CD8-positive, alpha-beta T cell (primary cell): ENCODE measurements at regions of chr15 and their contacts with region 1.

Region 1: GRCh38 chr15:56245871-56246814 is 2.5 kb upstream of the RFX7 start:
- DNase-seq: peak; percentile 72 to 92 (median 88)
- ATAC-seq: peak; percentile 74
- H3K4me3 ChIP-seq: peak overlapping the region; percentile 66 to 76
- H3K4me3 Mint-ChIP-seq: peak overlapping the region; percentile 92
- H3K27ac ChIP-seq: peak overlapping the region; percentile 33 to 69
- H3K27ac Mint-ChIP-seq: peak overlapping the region; percentile 95
- H3K4me1 ChIP-seq: peaks cover 28% of the 10 kb centered on the region
- H3K4me1 Mint-ChIP-seq: peaks cover 36% of the 10 kb centered on the region
- H3K27me3 ChIP-seq: no peaks in the 10 kb centered on the region
- H3K27me3 Mint-ChIP-seq: no peaks in the 10 kb centered on the region
- CTCF ChIP-seq: peak; percentile 100

Region 2: GRCh38 chr15:55407949-55408791 is 838.0 kb before region 1 on chr15 and contains the starts of genes CCPG1 and PIERCE2:
- CTCF ChIA-PET with region 1: no interaction called
- POLR2A ChIA-PET with region 1: no interaction called
- intact Hi-C with region 1: loop called in 1 of 2 experiments (anchors 5 kb)
- DNase-seq: peak; percentile 76 to 95 (median 86)
- ATAC-seq: peak; percentile 92
- H3K4me3 ChIP-seq: peak within 1 kb of the TSS; percentile 80 to 84
- H3K4me3 Mint-ChIP-seq: peak within 1 kb of the TSS; percentile 89
- H3K27ac ChIP-seq: peak within 1 kb of the TSS; percentile 82
- H3K27ac Mint-ChIP-seq: peak within 1 kb of the TSS; percentile 92
- H3K4me1 ChIP-seq: peaks cover 26% of the 10 kb centered on the region
- H3K4me1 Mint-ChIP-seq: peaks cover 34% of the 10 kb centered on the region
- H3K27me3 ChIP-seq: no peaks in the 10 kb centered on the region
- H3K27me3 Mint-ChIP-seq: no peaks in the 10 kb centered on the region
- CTCF ChIP-seq: peak; percentile 93
- total RNA-seq, gene CCPG1: 35.5 to 37.6 TPM
- total RNA-seq, gene PIERCE2: not detected

Region 3: DNA sequence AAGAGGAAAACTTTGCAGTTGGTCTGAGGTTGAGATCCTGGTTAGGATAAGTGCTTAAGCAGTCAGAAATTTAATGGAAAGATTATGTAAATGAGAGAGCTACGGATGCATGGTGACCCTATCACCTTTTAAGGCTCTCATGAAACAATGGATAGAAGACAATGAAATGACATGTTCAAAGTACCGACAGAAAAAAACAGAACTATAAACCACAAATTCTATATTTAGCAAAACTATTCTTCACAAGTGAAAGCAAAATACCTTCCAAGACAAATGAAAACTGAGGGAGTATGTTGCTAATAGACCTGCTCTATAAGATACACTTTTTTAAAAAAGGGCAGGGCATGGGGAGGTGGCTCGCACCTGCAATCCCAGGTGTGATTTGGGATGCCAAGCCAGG is 770.3 kb before region 1 on chr15:
- CTCF ChIA-PET with region 1: no interaction called
- POLR2A ChIA-PET with region 1: no interaction called
- intact Hi-C with region 1: no loop called
- DNase-seq: no peak
- ATAC-seq: no peak
- H3K4me3 ChIP-seq: no peak overlapping the region
- H3K4me3 Mint-ChIP-seq: no peak overlapping the region
- H3K27ac ChIP-seq: no peak overlapping the region
- H3K27ac Mint-ChIP-seq: no peak overlapping the region
- H3K4me1 ChIP-seq: no peaks in the 10 kb centered on the region
- H3K4me1 Mint-ChIP-seq: peaks cover 4% of the 10 kb centered on the region
- H3K27me3 ChIP-seq: no peaks in the 10 kb centered on the region
- H3K27me3 Mint-ChIP-seq: no peaks in the 10 kb centered on the region
- CTCF ChIP-seq: no peak

Region 4: GRCh38 chr15:55654561-55655031 is 591.5 kb before region 1 on chr15:
- CTCF ChIA-PET with region 1: no interaction called
- POLR2A ChIA-PET with region 1: no interaction called
- intact Hi-C with region 1: loop called (anchors 5 kb)
- DNase-seq: no peak
- ATAC-seq: no peak
- H3K4me3 ChIP-seq: no peak overlapping the region
- H3K4me3 Mint-ChIP-seq: no peak overlapping the region
- H3K27ac ChIP-seq: no peak overlapping the region
- H3K27ac Mint-ChIP-seq: no peak overlapping the region
- H3K4me1 ChIP-seq: no peaks in the 10 kb centered on the region
- H3K4me1 Mint-ChIP-seq: no peaks in the 10 kb centered on the region
- H3K27me3 ChIP-seq: no peaks in the 10 kb centered on the region
- H3K27me3 Mint-ChIP-seq: no peaks in the 10 kb centered on the region
- CTCF ChIP-seq: no peak

Region 5: GRCh38 chr15:56052395-56053045 is 193.6 kb before region 1 on chr15:
- CTCF ChIA-PET with region 1: interaction called, 14 read pairs
- POLR2A ChIA-PET with region 1: no interaction called
- intact Hi-C with region 1: no loop called
- DNase-seq: peak in 2 of 9 experiments; percentile 58 to 67
- ATAC-seq: peak; percentile 74
- H3K4me3 ChIP-seq: no peak overlapping the region
- H3K4me3 Mint-ChIP-seq: no peak overlapping the region
- H3K27ac ChIP-seq: no peak overlapping the region
- H3K27ac Mint-ChIP-seq: no peak overlapping the region
- H3K4me1 ChIP-seq: no peaks in the 10 kb centered on the region
- H3K4me1 Mint-ChIP-seq: no peaks in the 10 kb centered on the region
- H3K27me3 ChIP-seq: no peaks in the 10 kb centered on the region
- H3K27me3 Mint-ChIP-seq: no peaks in the 10 kb centered on the region
- CTCF ChIP-seq: peak; percentile 97

Region 6: GRCh38 chr15:56228854-56229253 is 17.3 kb before region 1 on chr15:
- CTCF ChIA-PET with region 1: no interaction called
- POLR2A ChIA-PET with region 1: no interaction called
- intact Hi-C with region 1: loop called in 1 of 2 experiments (anchors 2 kb)
- DNase-seq: no peak
- ATAC-seq: no peak
- H3K4me3 ChIP-seq: no peak overlapping the region
- H3K4me3 Mint-ChIP-seq: no peak overlapping the region
- H3K27ac ChIP-seq: no peak overlapping the region
- H3K27ac Mint-ChIP-seq: no peak overlapping the region
- H3K4me1 ChIP-seq: peaks cover 8% of the 10 kb centered on the region
- H3K4me1 Mint-ChIP-seq: peaks cover 12% of the 10 kb centered on the region
- H3K27me3 ChIP-seq: no peaks in the 10 kb centered on the region
- H3K27me3 Mint-ChIP-seq: no peaks in the 10 kb centered on the region
- CTCF ChIP-seq: no peak

Region 7: GRCh38 chr15:56886932-56887781 is 641.0 kb after region 1 on chr15:
- CTCF ChIA-PET with region 1: no interaction called
- POLR2A ChIA-PET with region 1: no interaction called
- intact Hi-C with region 1: loop called in 1 of 2 experiments (anchors 10 kb)
- DNase-seq: peak; percentile 52 to 94 (median 77)
- ATAC-seq: peak; percentile 85
- H3K4me3 ChIP-seq: peak overlapping the region; percentile 77
- H3K4me3 Mint-ChIP-seq: peak overlapping the region; percentile 86
- H3K27ac ChIP-seq: peak overlapping the region; percentile 68 to 92
- H3K27ac Mint-ChIP-seq: peak overlapping the region; percentile 86
- H3K4me1 ChIP-seq: peaks cover 14% of the 10 kb centered on the region
- H3K4me1 Mint-ChIP-seq: peaks cover 31% of the 10 kb centered on the region
- H3K27me3 ChIP-seq: no peaks in the 10 kb centered on the region
- H3K27me3 Mint-ChIP-seq: no peaks in the 10 kb centered on the region
- CTCF ChIP-seq: no peak

Region 8: DNA sequence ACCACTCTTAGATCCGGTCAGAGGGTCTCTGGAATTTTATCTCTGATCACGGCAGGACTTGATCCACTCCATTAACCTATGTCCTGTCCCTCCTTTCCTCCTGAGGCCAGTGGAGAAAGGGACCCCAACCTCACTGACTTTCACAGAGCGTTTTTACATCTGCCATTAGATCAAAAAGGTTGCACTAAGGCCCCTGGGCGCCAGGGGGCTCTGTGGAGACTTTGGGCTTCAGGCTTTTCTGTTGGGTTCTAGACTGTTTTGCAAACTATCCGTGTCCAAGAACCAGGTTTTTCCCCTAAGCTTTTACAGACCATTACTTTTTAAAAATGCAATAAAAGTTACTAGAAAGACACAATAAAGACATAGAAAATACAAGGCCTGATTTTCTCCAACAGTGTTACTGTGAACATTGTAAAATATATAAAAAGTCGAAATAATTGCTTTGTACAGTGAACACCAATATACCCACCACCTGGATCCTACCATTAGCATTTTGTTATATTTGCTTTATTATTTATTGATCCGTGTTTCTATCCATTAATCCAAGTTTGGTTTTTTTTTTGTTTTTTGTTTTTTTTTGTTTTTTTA is 1620.1 kb after region 1 on chr15:
- CTCF ChIA-PET with region 1: no interaction called
- POLR2A ChIA-PET with region 1: no interaction called
- intact Hi-C with region 1: no loop called
- DNase-seq: peak in 8 of 9 experiments; percentile 8 to 49 (median 24)
- ATAC-seq: no peak
- H3K4me3 ChIP-seq: no peak overlapping the region
- H3K4me3 Mint-ChIP-seq: no peak overlapping the region
- H3K27ac ChIP-seq: no peak overlapping the region
- H3K27ac Mint-ChIP-seq: no peak overlapping the region
- H3K4me1 ChIP-seq: peaks cover 10% of the 10 kb centered on the region
- H3K4me1 Mint-ChIP-seq: peaks cover 9% of the 10 kb centered on the region
- H3K27me3 ChIP-seq: peaks cover 0 to 4% of the 10 kb centered on the region in 2 experiments
- H3K27me3 Mint-ChIP-seq: peaks cover 31% of the 10 kb centered on the region
- CTCF ChIP-seq: peak; percentile 67